ENCODE measurements at regions of chr1 and their contacts with region 1.

Region 1: DNA sequence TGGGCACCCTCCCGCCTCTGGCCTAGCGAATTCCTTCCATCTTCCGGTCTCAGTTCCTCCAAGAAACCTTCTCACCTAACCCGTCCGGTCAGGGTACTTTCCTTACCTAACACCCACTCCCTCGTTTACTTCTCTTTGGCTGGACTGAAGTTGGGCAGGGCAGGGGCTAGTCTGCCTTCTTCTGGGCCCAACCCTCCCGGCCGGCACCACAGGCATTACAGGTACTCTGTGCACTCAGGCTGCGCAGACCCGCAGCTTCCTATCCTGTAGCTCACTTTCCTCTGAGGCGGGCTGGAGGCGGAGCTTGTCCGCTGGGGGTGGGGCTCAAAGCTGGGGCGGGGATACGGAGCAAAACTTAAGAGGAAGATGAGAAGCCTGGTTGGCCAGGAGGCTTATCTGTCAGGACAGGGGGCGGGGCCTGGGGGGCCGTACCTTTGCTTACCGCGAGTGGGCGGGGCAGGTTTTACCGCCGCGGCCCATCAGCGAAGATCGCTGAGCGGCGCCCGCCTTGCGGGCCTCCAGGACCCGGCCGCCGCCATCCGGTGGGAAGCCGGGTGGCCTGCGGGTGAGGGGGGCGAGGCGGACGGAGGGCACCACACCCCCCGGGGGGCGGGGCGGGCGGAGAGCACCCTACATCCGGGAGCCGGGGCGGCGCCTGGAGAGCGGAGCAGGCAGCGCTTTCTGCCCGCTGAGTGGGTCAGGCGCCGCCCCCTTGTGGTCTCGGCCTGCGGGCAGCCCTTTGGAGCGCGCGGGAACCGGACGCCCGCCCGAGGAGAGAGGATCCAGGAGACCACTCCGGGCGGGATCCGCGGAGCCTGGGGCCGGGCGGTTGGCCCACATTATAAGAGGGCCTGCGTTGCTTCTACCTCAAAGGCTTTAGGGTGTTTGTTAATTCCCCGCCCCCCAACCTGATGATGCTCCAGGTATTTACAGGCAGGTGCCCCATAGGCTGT is 31.9 kb downstream of the ZNF648 start:
- DNase-seq: peak; percentile 95 to 98 (median 98)
- ATAC-seq: peak; percentile 97
- H3K4me3 ChIP-seq: peak overlapping the region; percentile 72
- H3K4me3 Mint-ChIP-seq: peak overlapping the region; percentile 90 to 100 (median 96)
- H3K27ac ChIP-seq: peak overlapping the region; percentile 87
- H3K27ac Mint-ChIP-seq: peak overlapping the region; percentile 94 to 100 (median 99)
- H3K4me1 ChIP-seq: peaks cover 9 to 14% of the 10 kb centered on the region in 2 donors
- H3K4me1 Mint-ChIP-seq: peaks cover 12 to 21% (median 18%) of the 10 kb centered on the region in 7 donors
- H3K27me3 ChIP-seq: no peaks in the 10 kb centered on the region
- H3K27me3 Mint-ChIP-seq: peaks cover 0 to 6% (median 0%) of the 10 kb centered on the region in 5 donors

Region 2: DNA sequence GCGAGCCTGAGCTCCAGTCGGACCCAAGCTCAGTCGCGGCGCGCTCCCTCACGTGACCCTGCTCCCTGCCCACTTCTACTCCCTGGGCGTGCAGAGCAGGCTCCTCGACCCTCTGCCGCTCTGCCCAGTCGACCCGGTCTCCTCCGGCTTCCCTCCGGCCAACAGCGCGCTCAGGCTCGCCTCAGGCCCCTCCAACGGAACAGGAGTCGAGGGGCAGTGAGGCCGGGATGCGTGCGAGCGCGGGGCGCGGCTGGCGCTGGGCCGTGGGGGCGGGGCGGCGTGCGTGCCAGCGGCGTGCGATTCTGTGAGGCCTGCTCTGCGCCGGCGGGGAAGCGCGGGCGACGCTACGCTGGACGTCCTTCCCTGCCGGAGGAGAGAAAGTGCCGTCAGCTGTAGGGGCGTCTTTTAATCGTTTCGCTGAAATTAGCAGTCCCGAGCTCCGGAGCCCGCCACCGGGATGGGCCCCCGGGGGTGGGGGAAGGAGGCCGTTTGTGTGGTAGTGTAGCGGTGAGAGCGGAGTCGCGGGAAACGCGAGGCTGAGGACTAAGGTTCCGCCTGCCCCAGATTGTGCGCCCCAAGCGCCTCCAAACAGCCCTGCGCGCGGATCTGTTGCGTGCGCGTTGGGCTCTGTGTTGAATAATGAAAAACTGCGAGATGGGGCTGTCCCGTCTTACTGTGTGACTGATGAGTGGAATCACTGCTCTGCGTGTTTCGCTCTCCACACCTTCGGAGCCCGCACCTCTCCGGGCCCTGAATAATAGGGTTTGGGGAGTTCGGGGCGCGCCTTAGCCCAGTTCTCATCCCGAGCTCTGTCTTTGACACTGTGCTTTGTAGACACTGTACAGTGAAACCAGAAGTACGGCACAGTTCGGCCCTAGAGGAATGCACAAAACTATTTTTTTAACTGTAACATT is 1527.0 kb before region 1 on chr1 and contains the start of gene ACBD6:
- CTCF ChIA-PET with region 1: no interaction called
- POLR2A ChIA-PET with region 1: no interaction called
- intact Hi-C with region 1: loop called (anchors 2 to 10 kb)
- DNase-seq: peak; percentile 80 to 92 (median 89)
- ATAC-seq: peak; percentile 95
- H3K4me3 ChIP-seq: peak within 1 kb of the TSS; percentile 85
- H3K4me3 Mint-ChIP-seq: peak within 1 kb of the TSS; percentile 89 to 100 (median 97)
- H3K27ac ChIP-seq: peak within 1 kb of the TSS; percentile 79
- H3K27ac Mint-ChIP-seq: peak within 1 kb of the TSS; percentile 91 to 99 (median 98)
- H3K4me1 ChIP-seq: peaks cover 10 to 18% of the 10 kb centered on the region in 2 donors
- H3K4me1 Mint-ChIP-seq: peaks cover 17 to 55% (median 38%) of the 10 kb centered on the region in 7 donors
- H3K27me3 ChIP-seq: no peaks in the 10 kb centered on the region
- H3K27me3 Mint-ChIP-seq: peaks cover 0 to 5% (median 0%) of the 10 kb centered on the region in 5 donors
- total RNA-seq, gene ACBD6: 44.2 to 75.7 (median 47.3) TPM

Region 3: GRCh38 chr1:181189691-181190363 is 839.8 kb before region 1 on chr1:
- CTCF ChIA-PET with region 1: no interaction called
- POLR2A ChIA-PET with region 1: no interaction called
- intact Hi-C with region 1: loop called in 1 of 2 experiments (anchors 10 kb)
- DNase-seq: peak; percentile 49 to 95 (median 79)
- ATAC-seq: peak; percentile 88
- H3K4me3 ChIP-seq: no peak overlapping the region
- H3K4me3 Mint-ChIP-seq: peak overlapping the region in 8 of 10 donors; percentile 22 to 77 (median 55)
- H3K27ac ChIP-seq: no peak overlapping the region
- H3K27ac Mint-ChIP-seq: no peak overlapping the region
- H3K4me1 ChIP-seq: peaks cover 0 to 4% of the 10 kb centered on the region in 2 donors
- H3K4me1 Mint-ChIP-seq: peaks cover 0 to 13% (median 6%) of the 10 kb centered on the region in 7 donors
- H3K27me3 ChIP-seq: no peaks in the 10 kb centered on the region
- H3K27me3 Mint-ChIP-seq: peaks cover 0 to 22% (median 11%) of the 10 kb centered on the region in 5 donors

Region 4: GRCh38 chr1:181855380-181855779 is 174.3 kb before region 1 on chr1:
- CTCF ChIA-PET with region 1: no interaction called
- POLR2A ChIA-PET with region 1: no interaction called
- intact Hi-C with region 1: no loop called
- DNase-seq: no peak
- ATAC-seq: no peak
- H3K4me3 ChIP-seq: no peak overlapping the region
- H3K4me3 Mint-ChIP-seq: no peak overlapping the region
- H3K27ac ChIP-seq: no peak overlapping the region
- H3K27ac Mint-ChIP-seq: no peak overlapping the region
- H3K4me1 ChIP-seq: no peaks in the 10 kb centered on the region
- H3K4me1 Mint-ChIP-seq: no peaks in the 10 kb centered on the region
- H3K27me3 ChIP-seq: no peaks in the 10 kb centered on the region
- H3K27me3 Mint-ChIP-seq: peaks cover 4 to 13% (median 12%) of the 10 kb centered on the region in 5 donors

Region 5: GRCh38 chr1:182054698-182055326 is 25.2 kb after region 1 on chr1:
- CTCF ChIA-PET with region 1: interaction called, 3 read pairs
- POLR2A ChIA-PET with region 1: interaction called, 4 read pairs
- intact Hi-C with region 1: loop called (anchors 1 to 2 kb)
- DNase-seq: peak in 8 of 9 donors; percentile 27 to 63 (median 54)
- ATAC-seq: peak; percentile 69
- H3K4me3 ChIP-seq: no peak overlapping the region
- H3K4me3 Mint-ChIP-seq: no peak overlapping the region
- H3K27ac ChIP-seq: no peak overlapping the region
- H3K27ac Mint-ChIP-seq: no peak overlapping the region
- H3K4me1 ChIP-seq: no peaks in the 10 kb centered on the region
- H3K4me1 Mint-ChIP-seq: peaks cover 0 to 23% (median 0%) of the 10 kb centered on the region in 7 donors
- H3K27me3 ChIP-seq: no peaks in the 10 kb centered on the region
- H3K27me3 Mint-ChIP-seq: peaks cover 10 to 33% (median 24%) of the 10 kb centered on the region in 5 donors

Region 6: DNA sequence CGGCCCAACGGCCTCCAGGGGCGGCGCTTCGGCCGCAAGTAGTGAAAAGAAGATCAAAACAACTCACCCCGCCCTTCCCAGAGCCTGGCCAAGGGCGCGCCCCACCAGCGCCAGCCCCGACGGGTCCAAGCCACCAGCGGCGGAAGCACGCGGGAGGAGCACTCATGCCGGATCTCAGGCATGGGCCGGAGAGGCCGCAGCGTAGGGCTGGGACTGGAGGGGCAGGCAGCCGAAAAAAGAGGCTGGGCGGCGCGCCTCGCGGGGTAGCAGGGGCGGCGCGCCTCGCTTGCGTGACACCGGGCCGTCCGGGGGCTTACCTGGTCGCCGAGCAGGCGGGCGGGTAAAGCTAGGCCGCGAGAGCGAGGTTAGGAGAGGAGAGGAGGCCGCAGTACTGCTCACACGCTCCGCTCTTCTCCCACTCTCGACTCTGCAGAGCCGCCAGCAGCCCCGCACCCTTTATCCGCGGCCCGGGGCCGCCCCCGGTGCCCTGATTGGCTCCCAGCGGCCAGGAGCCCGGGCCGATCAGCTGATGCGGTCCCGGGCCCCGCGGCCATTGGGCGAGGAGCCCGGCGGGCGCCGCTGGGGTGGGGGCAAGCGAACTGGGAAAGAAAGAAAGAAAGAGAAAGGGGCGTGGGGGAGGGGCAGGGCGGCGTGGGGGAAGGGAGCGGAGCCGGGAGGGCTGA is 361.8 kb after region 1 on chr1 and contains the start of gene GLUL:
- CTCF ChIA-PET with region 1: no interaction called
- POLR2A ChIA-PET with region 1: no interaction called
- intact Hi-C with region 1: loop called (anchors 1 kb)
- DNase-seq: peak; percentile 46 to 83 (median 63)
- ATAC-seq: peak; percentile 87
- H3K4me3 ChIP-seq: peak within 1 kb of the TSS; percentile 73
- H3K4me3 Mint-ChIP-seq: peak within 1 kb of the TSS; percentile 87 to 98 (median 94)
- H3K27ac ChIP-seq: peak within 1 kb of the TSS; percentile 64
- H3K27ac Mint-ChIP-seq: peak within 1 kb of the TSS; percentile 82 to 97 (median 89)
- H3K4me1 ChIP-seq: peaks cover 10 to 14% of the 10 kb centered on the region in 2 donors
- H3K4me1 Mint-ChIP-seq: peaks cover 17 to 45% (median 29%) of the 10 kb centered on the region in 7 donors
- H3K27me3 ChIP-seq: no peaks in the 10 kb centered on the region
- H3K27me3 Mint-ChIP-seq: peaks cover 0 to 25% (median 0%) of the 10 kb centered on the region in 5 donors
- total RNA-seq, gene GLUL: 66.2 to 357 (median 112) TPM

Region 7: GRCh38 chr1:182604169-182605164 is 574.8 kb after region 1 on chr1 and contains the start of gene RGS16:
- CTCF ChIA-PET with region 1: no interaction called
- POLR2A ChIA-PET with region 1: no interaction called
- intact Hi-C with region 1: loop called in 1 of 2 experiments (anchors 5 kb)
- DNase-seq: peak; percentile 69 to 95 (median 76)
- ATAC-seq: peak; percentile 93
- H3K4me3 ChIP-seq: peak within 1 kb of the TSS; percentile 59
- H3K4me3 Mint-ChIP-seq: peak within 1 kb of the TSS in 8 of 10 donors; percentile 6 to 87 (median 82)
- H3K27ac ChIP-seq: peak within 1 kb of the TSS; percentile 37
- H3K27ac Mint-ChIP-seq: peak within 1 kb of the TSS in 6 of 9 donors; percentile 13 to 84 (median 71)
- H3K4me1 ChIP-seq: peaks cover 13 to 26% of the 10 kb centered on the region in 2 donors
- H3K4me1 Mint-ChIP-seq: peaks cover 4 to 37% (median 18%) of the 10 kb centered on the region in 7 donors
- H3K27me3 ChIP-seq: no peaks in the 10 kb centered on the region
- H3K27me3 Mint-ChIP-seq: peaks cover 0 to 12% (median 7%) of the 10 kb centered on the region in 5 donors
- total RNA-seq, gene RGS16: 0.49 to 17.5 (median 3.4) TPM

Region 8: GRCh38 chr1:182839209-182840065 is 809.8 kb after region 1 on chr1 and contains the start of gene DHX9:
- CTCF ChIA-PET with region 1: no interaction called
- POLR2A ChIA-PET with region 1: no interaction called
- intact Hi-C with region 1: loop called (anchors 1 kb)
- DNase-seq: peak; percentile 93 to 100 (median 97)
- ATAC-seq: peak; percentile 89
- H3K4me3 ChIP-seq: peak within 1 kb of the TSS; percentile 99
- H3K4me3 Mint-ChIP-seq: peak within 1 kb of the TSS; percentile 91 to 100 (median 98)
- H3K27ac ChIP-seq: peak within 1 kb of the TSS; percentile 84
- H3K27ac Mint-ChIP-seq: peak within 1 kb of the TSS; percentile 92 to 100 (median 98)
- H3K4me1 ChIP-seq: peaks cover 22 to 33% of the 10 kb centered on the region in 2 donors
- H3K4me1 Mint-ChIP-seq: peaks cover 36 to 61% (median 54%) of the 10 kb centered on the region in 7 donors
- H3K27me3 ChIP-seq: no peaks in the 10 kb centered on the region
- H3K27me3 Mint-ChIP-seq: peaks cover 0 to 9% (median 0%) of the 10 kb centered on the region in 5 donors
- total RNA-seq, gene DHX9: 207 to 299 (median 227) TPM

Measured in naive thymus-derived CD4-positive, alpha-beta T cell (primary cell).